ENCODE measurements at regions of chr22 and their contacts with region 1.

Region 1: DNA sequence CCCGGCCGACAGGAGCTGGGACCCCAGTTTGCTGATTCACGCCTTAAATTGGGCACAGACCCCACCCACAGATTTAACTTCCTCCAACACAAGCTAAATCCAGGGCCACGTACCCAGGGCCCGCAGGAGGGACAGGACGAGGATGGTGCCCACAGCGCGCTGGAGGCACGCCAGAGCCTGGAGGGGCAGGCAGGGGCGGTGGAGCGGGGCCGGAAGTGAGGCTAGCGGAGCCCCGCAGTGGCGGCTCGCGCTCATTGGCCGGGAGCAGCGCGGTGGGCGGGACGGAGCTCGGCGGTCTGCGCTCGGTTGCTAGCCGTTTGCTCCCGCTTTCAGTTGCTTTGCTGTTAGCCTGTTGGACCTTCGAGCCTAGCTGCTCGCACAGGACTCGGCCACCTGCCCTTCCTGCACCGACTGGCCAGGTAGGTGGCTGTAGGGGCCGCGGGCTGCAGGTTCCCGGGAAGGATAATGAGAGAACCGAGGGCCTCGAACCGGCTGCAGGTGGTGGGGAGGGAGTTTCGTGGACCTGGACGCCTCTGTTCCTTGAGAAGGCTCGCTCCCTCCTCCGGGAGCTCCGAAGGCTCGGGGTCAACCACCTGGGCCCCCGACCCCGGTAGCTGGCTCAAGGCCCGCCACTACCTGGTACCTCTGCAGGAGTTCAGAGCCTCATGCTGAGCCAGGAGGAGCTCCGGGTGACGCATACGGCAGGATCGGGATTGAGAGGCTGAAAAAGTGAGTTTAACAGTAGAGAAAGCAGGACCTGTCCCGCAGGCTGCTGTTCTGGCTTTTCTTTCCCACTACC is at the start of gene CCDC134:
- DNase-seq: peak; percentile 97

Region 2: DNA sequence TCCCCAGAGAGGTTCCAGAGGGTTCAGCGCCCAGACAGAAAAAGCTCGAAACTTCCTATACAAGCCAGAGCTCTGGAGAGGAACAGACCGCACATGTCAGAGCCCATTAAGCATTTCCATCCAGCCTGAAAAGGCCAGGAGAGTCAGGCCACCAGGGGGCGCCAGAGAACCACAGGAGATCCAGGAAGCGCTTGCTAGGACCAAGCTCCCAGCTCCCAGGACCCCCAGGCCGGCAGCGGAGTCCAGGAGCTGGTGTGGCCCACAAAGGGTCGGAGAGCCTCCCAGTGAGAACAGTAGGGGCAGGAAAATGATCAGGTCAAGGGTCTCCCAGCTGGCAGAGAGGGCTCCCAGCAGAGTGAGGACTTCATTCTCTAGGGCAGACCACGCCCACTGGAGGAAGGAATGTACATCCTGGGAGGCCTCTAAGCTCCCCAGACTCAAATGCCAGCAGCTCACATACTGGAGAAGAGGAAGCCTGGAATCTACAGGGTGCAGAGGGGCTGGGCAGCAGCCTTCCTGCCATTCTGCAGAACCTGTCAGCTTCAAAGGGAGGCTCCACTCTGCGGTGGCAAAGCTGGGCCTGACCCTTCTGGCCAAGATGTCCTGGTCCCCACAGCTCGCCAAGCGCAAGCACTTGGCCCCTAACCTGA is 103.3 kb before region 1 on chr22:
- CTCF ChIA-PET with region 1: interaction called, 22 read pairs
- POLR2A ChIA-PET with region 1: interaction called, 33 read pairs
- DNase-seq: peak; percentile 90

Region 3: GRCh38 chr22:41752011-41752970 is 48.3 kb before region 1 on chr22:
- CTCF ChIA-PET with region 1: no interaction called
- POLR2A ChIA-PET with region 1: interaction called, 10 read pairs
- DNase-seq: no peak

Region 4: GRCh38 chr22:41775338-41775737 is 25.2 kb before region 1 on chr22:
- CTCF ChIA-PET with region 1: no interaction called
- POLR2A ChIA-PET with region 1: interaction called, 19 read pairs
- DNase-seq: no peak

Region 5: DNA sequence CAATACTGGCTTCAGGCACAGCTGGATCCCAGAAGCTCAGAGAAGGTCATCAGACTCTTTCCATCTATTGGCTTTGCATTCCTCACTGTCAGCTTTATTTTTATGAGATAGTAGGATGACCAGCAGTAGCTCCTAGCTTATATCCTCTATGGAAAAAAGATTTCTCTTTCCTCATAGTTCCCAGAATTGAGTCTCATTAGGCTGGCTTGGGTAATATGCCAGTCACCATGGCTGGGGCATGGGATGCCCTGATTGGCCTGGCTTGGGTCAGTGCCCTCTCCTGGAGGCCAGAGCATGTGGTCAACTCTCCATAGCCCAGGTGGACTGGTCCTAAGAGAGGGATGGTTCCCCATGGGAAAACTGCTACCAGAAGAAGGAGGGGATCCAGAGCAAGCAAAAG is 14.1 kb before region 1 on chr22:
- CTCF ChIA-PET with region 1: interaction called, 3 read pairs
- POLR2A ChIA-PET with region 1: interaction called, 31 read pairs
- DNase-seq: no peak

Region 6: DNA sequence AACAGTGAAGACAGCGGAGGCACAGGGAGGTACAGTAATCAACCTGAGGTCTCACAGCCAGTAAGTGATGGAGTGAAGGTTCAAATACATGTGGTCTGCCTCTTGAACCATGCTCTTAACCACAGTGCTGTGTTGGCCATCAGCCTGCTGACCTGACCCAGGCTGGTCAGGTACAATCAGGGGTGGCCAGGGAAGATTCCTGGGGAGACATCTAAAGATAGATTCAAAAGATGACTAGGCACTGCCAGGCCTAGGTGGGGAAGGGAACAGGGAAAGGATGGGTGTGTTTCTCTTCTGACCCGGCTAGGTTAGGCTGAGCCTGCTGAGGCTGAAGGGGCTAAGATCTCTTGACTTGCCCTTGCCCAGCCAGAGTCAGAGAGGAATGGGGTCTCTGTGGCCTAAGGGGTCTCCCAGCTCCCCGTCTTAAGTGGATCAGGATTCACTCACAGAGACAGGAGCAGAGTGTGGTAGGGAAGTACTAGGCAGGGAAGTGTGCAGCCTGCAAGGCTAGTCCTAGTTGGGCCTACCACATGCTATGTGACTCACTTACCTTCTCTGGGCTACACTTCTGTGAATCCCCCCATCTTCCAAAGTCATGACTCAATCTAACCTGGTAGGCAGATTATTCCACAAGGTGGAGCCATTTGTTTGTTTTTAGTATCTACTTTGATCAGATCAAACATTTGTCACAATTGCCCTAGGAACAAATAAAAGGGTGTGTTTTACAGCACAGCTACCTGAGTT is 21.9 kb after region 1 on chr22:
- CTCF ChIA-PET with region 1: no interaction called
- POLR2A ChIA-PET with region 1: interaction called, 14 read pairs
- DNase-seq: peak; percentile 23

Region 7: DNA sequence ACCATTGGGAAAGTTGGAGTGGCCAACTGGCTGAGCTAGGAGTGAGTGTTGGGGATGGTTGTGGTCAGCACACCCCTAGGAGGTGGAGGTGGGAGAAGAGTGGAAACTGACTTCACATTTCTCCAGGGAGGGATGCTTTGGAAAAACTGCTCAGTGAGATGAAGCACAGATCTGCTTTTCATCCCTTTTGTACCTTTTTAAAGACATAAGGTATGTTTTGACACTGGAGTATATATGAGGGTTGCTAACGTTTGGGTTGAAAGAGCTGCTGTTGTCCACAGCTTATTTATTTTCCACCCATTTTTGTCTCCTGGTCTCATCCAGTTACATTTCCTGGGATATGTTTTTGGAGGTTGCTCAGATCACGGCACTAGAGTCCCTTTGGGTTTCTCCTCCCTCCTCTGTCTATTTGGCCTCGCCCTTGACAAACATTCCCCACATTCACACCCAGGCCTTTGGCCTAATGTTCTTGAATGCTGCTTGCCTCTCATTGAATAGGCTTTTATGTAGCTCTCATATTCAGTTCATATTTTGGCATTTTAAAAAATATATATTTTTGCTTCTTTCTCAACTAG is 40.6 kb after region 1 on chr22:
- CTCF ChIA-PET with region 1: no interaction called
- POLR2A ChIA-PET with region 1: interaction called, 11 read pairs
- DNase-seq: no peak